HEK293 (cell line): ENCODE measurements at regions of chr7 and their contacts with region 1.

Region 1: DNA sequence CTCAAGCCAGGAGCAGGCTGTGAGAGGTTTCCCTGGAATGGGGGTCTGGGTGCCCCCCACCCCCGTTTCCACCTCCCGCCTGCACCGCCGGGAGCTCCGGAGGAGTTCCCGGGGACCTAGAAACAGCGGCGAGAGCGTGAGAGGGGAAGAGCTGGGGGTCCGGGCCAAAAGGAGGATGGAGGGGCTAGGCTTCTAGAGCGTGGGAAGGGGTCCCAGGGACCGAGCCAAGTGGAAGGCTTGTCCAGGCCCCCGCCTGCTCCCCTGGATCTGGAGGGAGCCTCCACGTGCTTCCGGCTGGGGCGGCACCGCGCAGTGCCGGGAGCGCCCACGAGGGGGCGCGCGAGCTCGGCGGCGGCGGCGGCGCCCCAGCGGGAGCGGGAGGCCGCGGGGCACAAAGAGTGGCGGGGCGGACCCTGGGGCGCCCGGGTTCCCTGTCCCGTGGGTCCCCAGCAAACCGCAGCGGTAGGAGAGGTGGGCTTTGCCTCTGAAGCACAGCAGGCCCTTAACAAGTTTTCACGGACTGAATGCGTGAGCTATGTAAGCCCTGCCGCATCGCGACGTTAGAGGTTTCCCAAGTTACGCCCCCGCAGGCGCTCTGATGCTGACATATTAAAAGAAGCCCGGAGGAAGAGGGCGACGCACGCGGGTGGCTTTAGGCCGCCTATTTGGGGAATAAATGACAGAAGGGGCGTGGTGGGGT is 104.4 kb upstream of the LRRC4 start:
- H3K4me3 ChIP-seq: peak overlapping the region; percentile 58
- H3K27ac ChIP-seq: no peak overlapping the region
- H3K4me1 ChIP-seq: no peaks in the 10 kb centered on the region
- CTCF ChIP-seq: no peak

Region 2: GRCh38 chr7:128154504-128154903 is 18.8 kb after region 1 on chr7:
- CTCF ChIA-PET with region 1: interaction called, 15 read pairs
- POLR2A ChIA-PET with region 1: no interaction called
- H3K4me3 ChIP-seq: no peak overlapping the region
- H3K27ac ChIP-seq: no peak overlapping the region
- H3K4me1 ChIP-seq: no peaks in the 10 kb centered on the region
- CTCF ChIP-seq: no peak

Region 3: DNA sequence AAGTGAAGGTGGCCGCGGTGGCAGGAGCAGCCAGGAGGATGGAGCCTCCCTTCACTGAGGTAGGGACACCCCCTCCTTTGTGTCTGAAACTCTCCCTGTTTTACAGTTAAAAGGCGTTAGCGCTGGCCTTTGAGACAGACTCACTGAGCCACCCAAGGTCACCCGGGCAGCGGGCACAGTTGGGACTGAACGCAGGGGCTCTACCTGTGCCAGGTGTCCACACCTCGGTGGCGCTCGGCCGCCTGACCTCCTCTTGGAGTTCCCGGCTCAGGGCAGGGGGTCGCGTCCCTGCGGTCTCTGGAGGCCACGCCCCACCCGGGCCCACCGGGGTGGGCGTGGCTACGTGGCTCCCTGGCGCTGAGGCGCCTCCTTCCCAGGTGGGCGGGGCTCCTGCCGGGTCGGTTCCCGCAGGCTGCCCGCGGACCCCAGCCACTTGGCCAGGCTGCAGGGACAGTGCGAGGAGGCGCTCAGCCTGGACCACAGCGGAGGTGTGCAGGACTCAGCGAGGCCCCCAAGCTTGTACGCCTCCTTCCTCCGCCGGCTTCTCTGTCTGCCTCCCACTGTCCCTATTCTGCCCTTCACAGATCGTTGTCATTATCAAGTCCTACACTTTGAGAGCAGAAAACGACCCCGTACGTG is 65.5 kb after region 1 on chr7:
- CTCF ChIA-PET with region 1: interaction called, 115 read pairs
- POLR2A ChIA-PET with region 1: no interaction called
- H3K4me3 ChIP-seq: no peak overlapping the region
- H3K27ac ChIP-seq: no peak overlapping the region
- H3K4me1 ChIP-seq: no peaks in the 10 kb centered on the region
- CTCF ChIP-seq: no peak

Region 4: DNA sequence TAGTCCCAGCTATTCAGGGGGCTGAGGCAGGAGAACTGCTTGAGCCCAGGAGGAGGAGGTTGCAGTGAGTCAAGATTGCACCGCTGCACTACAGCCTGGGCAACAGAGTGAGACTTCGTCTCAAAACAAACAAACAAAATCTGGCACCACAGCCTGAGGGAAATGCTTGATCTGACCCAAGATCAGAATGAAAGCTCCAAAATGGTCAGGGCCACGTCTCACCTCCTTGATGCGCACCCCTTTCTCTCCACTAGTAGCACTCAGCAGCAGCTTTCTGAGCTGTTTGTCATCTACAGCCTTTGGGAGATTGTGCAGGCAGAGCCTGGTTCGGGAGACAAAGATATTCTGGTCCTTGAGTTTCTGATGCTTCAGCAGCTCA is 185.4 kb after region 1 on chr7:
- CTCF ChIA-PET with region 1: no interaction called
- POLR2A ChIA-PET with region 1: no interaction called
- H3K4me3 ChIP-seq: no peak overlapping the region
- H3K27ac ChIP-seq: no peak overlapping the region
- H3K4me1 ChIP-seq: no peaks in the 10 kb centered on the region
- CTCF ChIP-seq: no peak